ENCODE measurements at regions of chr9 and their contacts with region 1.

Region 1: DNA sequence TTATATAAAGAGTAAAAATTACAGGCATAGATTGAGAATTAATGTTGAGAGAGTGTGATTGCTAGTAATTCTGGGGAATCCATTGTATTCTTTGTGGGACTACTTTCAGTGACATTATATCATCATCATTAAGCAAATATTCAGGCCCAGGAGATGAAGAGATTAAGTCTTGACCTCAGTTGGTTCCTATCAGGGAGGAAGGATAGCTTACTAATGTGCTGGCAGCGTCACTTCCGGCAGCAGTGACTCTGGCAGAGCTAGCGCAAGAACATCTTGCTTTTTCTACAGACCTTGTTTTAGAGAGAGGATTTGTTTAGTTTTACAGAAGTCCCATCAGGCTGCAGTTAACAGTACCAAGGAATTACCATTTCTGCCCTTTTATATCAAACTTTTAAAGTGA is 20.2 kb downstream of the OSTF1 start:
- DNase-seq: peak in 1 of 2 donors; percentile 46
- ATAC-seq: peak; percentile 71 to 84 (median 77)
- H3K4me3 ChIP-seq: no peak overlapping the region
- H3K4me3 Mint-ChIP-seq: peak overlapping the region; percentile 69
- H3K27ac ChIP-seq: peak overlapping the region; percentile 50
- H3K27ac Mint-ChIP-seq: peak overlapping the region; percentile 69 to 88
- H3K4me1 ChIP-seq: peaks cover 50% of the 10 kb centered on the region
- H3K4me1 Mint-ChIP-seq: peaks cover 70 to 78% of the 10 kb centered on the region in 2 donors
- H3K27me3 ChIP-seq: no peaks in the 10 kb centered on the region
- H3K27me3 Mint-ChIP-seq: no peaks in the 10 kb centered on the region
- CTCF ChIP-seq: no peak

Region 2: DNA sequence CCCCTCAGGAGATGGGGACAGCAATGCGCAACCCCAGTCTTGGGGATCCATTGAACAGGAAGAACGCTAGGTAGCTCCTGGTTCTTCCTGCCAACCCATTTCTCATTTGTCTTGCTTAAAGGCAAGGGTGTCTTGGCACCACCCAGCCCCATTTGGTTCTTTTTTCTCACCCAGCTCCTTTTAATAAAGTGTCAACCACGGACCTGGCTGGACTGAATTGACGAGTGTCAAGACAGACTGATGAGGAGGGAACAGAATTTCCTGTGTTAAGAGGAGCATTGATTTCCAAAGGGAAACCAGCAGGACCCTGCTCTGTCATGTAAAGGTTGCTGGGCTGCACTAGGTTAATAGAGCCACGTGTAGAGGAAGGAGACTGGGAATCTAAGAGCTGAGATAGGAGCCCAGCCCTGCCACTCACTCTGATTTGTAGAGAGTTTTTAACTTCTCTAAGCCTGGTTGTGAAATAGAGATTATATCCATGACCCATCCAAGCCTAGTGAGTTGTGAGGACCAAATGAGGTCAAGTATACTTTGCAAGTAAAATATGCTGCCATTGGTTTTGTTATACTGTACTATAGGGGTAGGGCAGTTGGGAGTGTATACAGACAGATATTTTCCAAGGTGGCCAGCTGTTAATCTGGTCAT is 13.5 kb after region 1 on chr9:
- intact Hi-C with region 1: loop called (anchors 2 kb)
- DNase-seq: peak in 1 of 2 donors; percentile 18
- ATAC-seq: peak; percentile 77 to 78 (median 78)
- H3K4me3 ChIP-seq: no peak overlapping the region
- H3K4me3 Mint-ChIP-seq: peak overlapping the region; percentile 77
- H3K27ac ChIP-seq: peak overlapping the region; percentile 32
- H3K27ac Mint-ChIP-seq: peak overlapping the region; percentile 76 to 83
- H3K4me1 ChIP-seq: peaks cover 21% of the 10 kb centered on the region
- H3K4me1 Mint-ChIP-seq: peaks cover 65 to 70% of the 10 kb centered on the region in 2 donors
- H3K27me3 ChIP-seq: no peaks in the 10 kb centered on the region
- H3K27me3 Mint-ChIP-seq: no peaks in the 10 kb centered on the region
- CTCF ChIP-seq: no peak

Measured in natural killer cell (primary cell).